ENCODE measurements at regions of chr2 and their contacts with region 1.

Region 1: GRCh38 chr2:172821370-172822347 is 86.0 kb downstream of the RAPGEF4 start:
- DNase-seq: no peak
- ATAC-seq: peak; percentile 61 to 90
- H3K4me3 ChIP-seq: peak overlapping the region; percentile 55
- H3K27ac ChIP-seq: peak overlapping the region; percentile 5
- H3K4me1 ChIP-seq: no peaks in the 10 kb centered on the region
- H3K27me3 ChIP-seq: no peaks in the 10 kb centered on the region

Region 2: DNA sequence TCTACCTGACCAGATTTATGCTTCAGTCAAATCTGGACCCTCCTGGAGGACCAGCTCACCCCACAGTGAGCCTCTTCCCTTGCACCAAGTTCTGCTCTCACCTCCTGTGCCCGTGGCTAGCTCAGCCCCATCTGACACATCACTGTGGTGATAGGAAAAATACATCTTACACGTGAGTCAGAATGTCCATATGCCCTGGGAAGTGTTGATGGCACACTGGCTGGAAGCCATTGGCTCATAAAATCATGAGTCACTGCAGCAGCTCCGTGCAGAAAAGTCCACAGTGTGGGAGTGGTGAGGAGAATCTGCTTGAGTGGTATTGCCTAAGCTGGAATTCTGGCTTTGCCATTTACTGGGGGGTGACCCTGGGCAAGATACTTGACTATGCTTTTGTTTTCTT is 128.6 kb before region 1 on chr2:
- intact Hi-C with region 1: no loop called
- DNase-seq: peak; percentile 68 to 79 (median 77)
- ATAC-seq: peak; percentile 94 to 95
- H3K4me3 ChIP-seq: no peak overlapping the region
- H3K27ac ChIP-seq: no peak overlapping the region
- H3K4me1 ChIP-seq: no peaks in the 10 kb centered on the region
- H3K27me3 ChIP-seq: no peaks in the 10 kb centered on the region

Region 3: GRCh38 chr2:172864182-172864581 is 42.5 kb after region 1 on chr2:
- intact Hi-C with region 1: loop called in 1 of 4 experiments (anchors 5 kb)
- DNase-seq: peak; percentile 47 to 84 (median 69)
- ATAC-seq: peak; percentile 40 to 74
- H3K4me3 ChIP-seq: no peak overlapping the region
- H3K27ac ChIP-seq: no peak overlapping the region
- H3K4me1 ChIP-seq: peaks cover 8% of the 10 kb centered on the region
- H3K27me3 ChIP-seq: no peaks in the 10 kb centered on the region

Measured in right cardiac atrium (tissue), 5 donors.